Activated CD8-positive, alpha-beta T cell treated with anti-CD3 and anti-CD28 coated beads, Interleukin-2, amount 10 ng/mL, durations not matched to agents 7 days and 5 days (primary cell): ENCODE measurements at regions of chr18 and their contacts with region 1.

Region 1: GRCh38 chr18:58671111-58671631 is at the start of gene MALT1:
- DNase-seq: peak; percentile 96
- ATAC-seq: peak; percentile 92
- H3K4me3 Mint-ChIP-seq: peak within 1 kb of the TSS; percentile 98
- H3K27ac Mint-ChIP-seq: peak within 1 kb of the TSS; percentile 97
- H3K4me1 Mint-ChIP-seq: peaks cover 56% of the 10 kb centered on the region
- H3K27me3 Mint-ChIP-seq: no peaks in the 10 kb centered on the region
- total RNA-seq, gene MALT1: 52.7 to 57.1 TPM

Region 2: GRCh38 chr18:58407649-58408407 is 263.3 kb before region 1 on chr18:
- CTCF ChIA-PET with region 1: no interaction called
- POLR2A ChIA-PET with region 1: no interaction called
- DNase-seq: no peak
- ATAC-seq: no peak
- H3K4me3 Mint-ChIP-seq: no peak overlapping the region
- H3K27ac Mint-ChIP-seq: no peak overlapping the region
- H3K4me1 Mint-ChIP-seq: no peaks in the 10 kb centered on the region
- H3K27me3 Mint-ChIP-seq: no peaks in the 10 kb centered on the region

Region 3: DNA sequence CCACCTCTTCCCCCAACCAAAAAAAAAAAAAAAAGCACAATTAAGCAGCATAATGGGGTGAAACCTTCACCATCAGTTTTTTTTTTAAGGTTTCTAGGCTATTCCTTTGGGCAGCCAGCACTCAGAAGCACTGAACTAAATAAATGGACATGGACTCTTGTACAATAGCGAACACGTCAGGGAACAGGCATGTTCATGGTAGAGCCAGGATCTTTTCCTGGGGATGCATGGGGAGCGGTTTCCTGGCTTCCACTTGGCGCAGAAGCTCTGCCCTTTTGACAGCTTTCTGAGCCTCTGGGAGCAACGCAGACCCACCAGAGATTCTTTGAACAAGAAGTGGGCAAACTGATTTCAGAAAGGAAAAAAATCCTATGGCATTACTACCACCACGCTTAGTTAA is 77.2 kb before region 1 on chr18:
- CTCF ChIA-PET with region 1: no interaction called
- POLR2A ChIA-PET with region 1: no interaction called
- DNase-seq: no peak
- ATAC-seq: no peak
- H3K4me3 Mint-ChIP-seq: no peak overlapping the region
- H3K27ac Mint-ChIP-seq: no peak overlapping the region
- H3K4me1 Mint-ChIP-seq: no peaks in the 10 kb centered on the region
- H3K27me3 Mint-ChIP-seq: peaks cover 2% of the 10 kb centered on the region

Region 4: DNA sequence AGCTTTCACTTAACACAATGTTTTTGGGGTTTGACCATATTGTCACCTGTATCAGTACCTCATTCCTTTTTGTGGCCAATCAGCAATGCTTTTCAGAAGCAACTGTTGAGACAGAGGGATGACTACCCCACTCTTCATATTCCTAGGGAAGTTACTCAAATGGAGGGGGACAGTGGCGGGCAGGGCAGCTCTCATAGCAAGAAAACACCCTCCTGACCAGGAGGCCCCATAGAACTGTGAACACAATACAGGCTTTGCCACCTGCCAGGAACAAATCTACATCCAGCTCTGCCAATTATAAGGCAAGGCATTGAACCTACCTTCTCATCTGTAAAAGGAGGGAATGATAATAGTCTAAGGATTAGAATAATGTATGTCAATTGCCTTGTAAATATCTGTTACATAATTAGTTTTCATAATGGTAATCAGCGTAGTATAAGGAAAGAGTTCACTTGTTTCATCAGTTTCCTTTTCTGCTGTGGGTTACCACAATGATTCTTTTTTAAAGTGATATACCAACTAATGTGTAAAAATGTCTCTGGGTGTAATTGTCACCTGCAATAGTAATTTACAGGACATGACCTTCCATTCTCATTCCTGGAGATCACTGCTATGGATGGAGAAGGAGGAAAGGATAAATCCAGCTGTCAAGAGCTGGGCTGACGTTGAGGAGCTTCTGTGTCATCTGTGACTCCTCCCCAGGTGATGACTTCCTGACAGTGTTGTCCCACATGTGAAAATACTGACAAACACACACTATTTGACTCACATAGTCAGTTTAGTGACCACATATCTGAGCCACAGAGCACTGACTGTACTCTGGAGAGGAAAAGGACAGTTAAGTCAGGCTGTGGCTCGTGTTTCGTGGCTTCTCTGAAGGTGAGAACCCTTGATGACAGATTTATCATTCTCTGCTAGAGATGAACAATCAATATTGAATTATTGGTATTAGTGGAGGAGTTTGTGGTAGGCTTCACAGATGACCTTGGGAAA is 55.7 kb before region 1 on chr18:
- CTCF ChIA-PET with region 1: interaction called, 3 read pairs
- POLR2A ChIA-PET with region 1: interaction called, 21 read pairs
- DNase-seq: peak; percentile 83
- ATAC-seq: peak; percentile 98
- H3K4me3 Mint-ChIP-seq: peak overlapping the region; percentile 54
- H3K27ac Mint-ChIP-seq: peak overlapping the region; percentile 94
- H3K4me1 Mint-ChIP-seq: peaks cover 41% of the 10 kb centered on the region
- H3K27me3 Mint-ChIP-seq: peaks cover 3% of the 10 kb centered on the region

Region 5: DNA sequence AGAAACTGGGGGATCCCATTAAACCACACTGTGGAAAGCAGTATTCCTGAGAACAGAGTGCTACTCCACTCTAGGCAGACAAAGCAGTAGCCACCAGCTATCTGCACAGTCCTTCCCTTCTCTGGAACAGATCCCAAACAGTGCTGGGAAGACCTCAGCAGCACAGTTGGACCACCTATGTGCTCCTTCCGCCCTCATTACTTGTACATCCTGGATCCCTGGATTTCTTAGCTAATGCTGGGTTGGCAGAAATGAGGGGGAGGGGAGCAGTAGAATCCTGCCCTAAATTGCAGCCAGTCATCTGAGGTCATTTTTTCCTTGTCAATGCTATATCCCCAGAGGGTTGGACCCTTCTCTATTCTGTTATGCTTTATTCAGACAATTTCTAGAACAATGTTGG is 13.7 kb before region 1 on chr18:
- CTCF ChIA-PET with region 1: interaction called, 32 read pairs
- POLR2A ChIA-PET with region 1: interaction called, 85 read pairs
- DNase-seq: no peak
- ATAC-seq: no peak
- H3K4me3 Mint-ChIP-seq: peak overlapping the region; percentile 70
- H3K27ac Mint-ChIP-seq: peak overlapping the region; percentile 96
- H3K4me1 Mint-ChIP-seq: peaks cover 67% of the 10 kb centered on the region
- H3K27me3 Mint-ChIP-seq: no peaks in the 10 kb centered on the region

Region 6: GRCh38 chr18:58691256-58691655 is 20.1 kb after region 1 on chr18:
- CTCF ChIA-PET with region 1: interaction called, 8 read pairs
- POLR2A ChIA-PET with region 1: interaction called, 75 read pairs
- DNase-seq: no peak
- ATAC-seq: no peak
- H3K4me3 Mint-ChIP-seq: no peak overlapping the region
- H3K27ac Mint-ChIP-seq: peak overlapping the region; percentile 18
- H3K4me1 Mint-ChIP-seq: peaks cover 88% of the 10 kb centered on the region
- H3K27me3 Mint-ChIP-seq: no peaks in the 10 kb centered on the region

Region 7: DNA sequence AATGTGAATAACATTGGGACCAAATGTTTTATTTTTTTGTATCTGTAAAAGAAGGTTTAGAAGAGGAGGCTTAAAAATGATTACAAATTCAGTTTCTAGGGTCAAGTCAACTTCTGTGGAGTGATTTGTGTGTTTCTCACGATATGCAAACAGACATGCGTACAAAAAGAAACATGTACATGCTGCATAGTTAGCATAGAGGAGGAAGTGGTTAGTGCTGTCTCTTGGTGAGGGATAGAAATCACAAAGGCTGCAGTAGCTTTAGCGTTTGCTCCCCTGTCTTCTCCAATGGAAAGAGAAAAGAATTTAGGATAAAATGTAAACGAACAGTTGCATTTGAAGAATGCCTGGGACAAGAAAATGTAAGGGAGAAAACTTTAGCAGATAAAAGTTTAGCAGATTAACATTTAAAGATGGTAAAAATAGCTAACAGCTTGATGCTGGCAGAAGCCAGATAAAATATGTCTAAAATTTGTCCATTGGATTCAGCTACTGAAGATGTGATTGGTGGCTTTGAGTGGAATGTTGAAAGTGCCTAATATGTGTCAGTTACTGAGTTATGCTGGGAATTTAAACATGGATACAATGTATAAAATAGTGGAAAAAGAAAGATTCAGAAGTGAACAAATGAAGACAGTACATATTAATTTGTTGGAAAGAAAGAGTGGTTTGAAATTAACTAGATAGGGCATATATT is 45.0 kb after region 1 on chr18:
- CTCF ChIA-PET with region 1: interaction called, 4 read pairs
- POLR2A ChIA-PET with region 1: interaction called, 15 read pairs
- DNase-seq: peak; percentile 38
- ATAC-seq: peak; percentile 96
- H3K4me3 Mint-ChIP-seq: peak overlapping the region; percentile 60
- H3K27ac Mint-ChIP-seq: peak overlapping the region; percentile 89
- H3K4me1 Mint-ChIP-seq: peaks cover 47% of the 10 kb centered on the region
- H3K27me3 Mint-ChIP-seq: no peaks in the 10 kb centered on the region

Region 8: GRCh38 chr18:58727776-58728500 is 56.8 kb after region 1 on chr18:
- CTCF ChIA-PET with region 1: no interaction called
- POLR2A ChIA-PET with region 1: no interaction called
- DNase-seq: no peak
- ATAC-seq: no peak
- H3K4me3 Mint-ChIP-seq: no peak overlapping the region
- H3K27ac Mint-ChIP-seq: no peak overlapping the region
- H3K4me1 Mint-ChIP-seq: no peaks in the 10 kb centered on the region
- H3K27me3 Mint-ChIP-seq: no peaks in the 10 kb centered on the region

Region 9: DNA sequence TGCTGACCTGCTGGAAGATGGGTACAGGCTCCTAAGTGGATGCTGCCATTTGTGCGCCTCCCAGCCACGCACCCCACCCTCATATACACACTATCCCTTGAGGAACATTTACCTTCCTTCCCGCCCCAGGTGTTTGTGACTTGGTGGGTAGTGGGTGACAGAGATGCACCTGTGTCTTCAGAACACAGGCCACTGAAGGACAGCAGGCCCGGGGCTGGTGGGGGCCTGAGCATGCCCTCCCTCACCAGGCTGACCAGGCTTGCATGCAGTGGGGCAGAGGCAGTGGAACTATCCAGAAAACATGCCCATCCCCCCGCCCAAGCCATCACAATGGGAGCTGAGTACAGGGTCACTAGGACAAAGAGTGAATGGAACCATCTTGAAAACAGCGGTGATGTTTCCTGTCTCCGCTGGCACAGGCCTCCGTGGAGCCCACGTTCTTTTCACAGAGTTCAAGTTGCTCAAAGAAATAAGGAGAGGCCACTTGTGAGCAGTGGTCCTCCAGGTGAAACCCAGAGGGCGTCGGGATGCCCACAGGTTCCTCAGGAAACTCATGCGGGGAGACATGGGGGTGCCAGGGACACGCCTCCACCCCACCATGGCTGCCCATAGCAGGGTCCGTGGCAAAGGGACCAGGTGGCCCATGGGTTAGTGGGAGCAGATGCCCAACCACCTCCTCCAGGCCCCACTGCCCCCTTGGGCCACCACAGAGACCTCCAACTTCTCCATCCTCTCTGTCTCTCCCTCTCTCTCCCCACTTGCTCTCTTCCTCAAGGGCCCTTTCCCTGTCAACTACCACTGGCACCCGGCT is 91.0 kb after region 1 on chr18:
- CTCF ChIA-PET with region 1: interaction called, 39 read pairs
- POLR2A ChIA-PET with region 1: interaction called, 5 read pairs
- DNase-seq: peak; percentile 18
- ATAC-seq: no peak
- H3K4me3 Mint-ChIP-seq: no peak overlapping the region
- H3K27ac Mint-ChIP-seq: peak overlapping the region; percentile 12
- H3K4me1 Mint-ChIP-seq: peaks cover 41% of the 10 kb centered on the region
- H3K27me3 Mint-ChIP-seq: peaks cover 29% of the 10 kb centered on the region